Vagina (tissue), 2 donors: ENCODE measurements at regions of chr2 and their contacts with region 1.

Region 1: GRCh38 chr2:232438951-232439757 is 16.8 kb upstream of the ALPI start:
- DNase-seq: no peak
- H3K4me3 ChIP-seq: no peak overlapping the region
- H3K27ac ChIP-seq: no peak overlapping the region
- H3K4me1 ChIP-seq: no peaks in the 10 kb centered on the region
- H3K27me3 ChIP-seq: no peaks in the 10 kb centered on the region
- CTCF ChIP-seq: peak in 1 of 3 experiments; percentile 29
- POLR2A ChIP-seq: no peak

Region 2: GRCh38 chr2:231905026-231905425 is 534.1 kb before region 1 on chr2:
- intact Hi-C with region 1: loop called (anchors 5 kb)
- DNase-seq: no peak
- H3K4me3 ChIP-seq: no peak overlapping the region
- H3K27ac ChIP-seq: no peak overlapping the region
- H3K4me1 ChIP-seq: no peaks in the 10 kb centered on the region
- H3K27me3 ChIP-seq: no peaks in the 10 kb centered on the region
- CTCF ChIP-seq: no peak
- POLR2A ChIP-seq: no peak

Region 3: DNA sequence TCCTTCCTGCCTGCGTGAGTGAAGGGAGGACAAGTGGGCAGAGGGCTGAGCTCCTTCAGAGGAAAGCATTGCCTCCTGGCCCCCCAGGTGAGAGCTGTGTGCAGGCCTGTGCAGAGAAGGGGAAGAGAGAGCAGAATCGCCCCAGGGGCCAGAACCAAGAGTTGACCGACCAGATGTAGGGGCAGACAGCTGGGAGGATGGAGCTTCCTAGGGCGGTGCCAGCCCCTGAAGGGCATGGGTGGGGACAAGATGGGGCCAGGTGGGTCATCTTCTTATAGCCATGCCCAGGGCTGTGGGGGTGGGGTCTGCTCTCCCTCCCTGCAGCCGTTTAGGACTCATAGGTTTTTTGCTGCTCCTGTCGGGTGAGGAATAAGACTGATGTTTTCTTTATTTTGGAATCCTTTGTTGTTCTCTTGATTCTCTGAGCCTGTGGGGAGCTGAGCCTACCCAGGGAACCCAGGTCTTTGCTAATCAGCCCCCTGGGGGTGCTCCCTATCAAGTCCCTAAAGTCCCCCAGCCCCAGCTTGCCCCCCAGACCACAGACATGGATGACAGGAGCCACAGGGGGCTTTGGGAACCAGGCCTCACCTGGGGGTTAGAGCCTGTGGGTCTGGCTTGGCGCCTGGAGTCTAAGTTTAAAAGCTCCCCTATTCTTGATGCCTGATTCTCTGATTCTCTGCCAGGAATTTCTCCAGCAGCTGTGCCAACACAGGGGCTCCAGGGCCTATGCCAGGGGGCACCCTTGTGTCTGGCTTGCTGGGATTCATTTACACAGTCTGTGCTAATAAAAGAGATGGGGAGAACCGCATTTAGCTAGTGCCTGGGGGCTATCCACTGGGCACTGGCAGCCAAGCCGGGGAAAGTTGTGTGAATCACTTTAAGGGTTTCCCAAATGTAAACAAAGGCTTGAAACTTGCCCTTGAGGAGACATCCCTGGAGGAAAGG is 184.9 kb after region 1 on chr2:
- intact Hi-C with region 1: no loop called
- DNase-seq: no peak
- H3K4me3 ChIP-seq: no peak overlapping the region
- H3K27ac ChIP-seq: no peak overlapping the region
- H3K4me1 ChIP-seq: no peaks in the 10 kb centered on the region
- H3K27me3 ChIP-seq: no peaks in the 10 kb centered on the region
- CTCF ChIP-seq: no peak
- POLR2A ChIP-seq: no peak